ENCODE measurements at regions of chr1 and their contacts with region 1.

Region 1: GRCh38 chr1:157969697-157970485 is 23.6 kb upstream of the KIRREL1 start:
- DNase-seq: no peak
- H3K4me3 ChIP-seq: no peak overlapping the region
- CTCF ChIP-seq: peak; percentile 86

Region 2: GRCh38 chr1:157956732-157957131 is 13.2 kb before region 1 on chr1:
- CTCF ChIA-PET with region 1: interaction called, 16 read pairs
- POLR2A ChIA-PET with region 1: no interaction called
- DNase-seq: no peak
- H3K4me3 ChIP-seq: no peak overlapping the region
- CTCF ChIP-seq: no peak

Region 3: DNA sequence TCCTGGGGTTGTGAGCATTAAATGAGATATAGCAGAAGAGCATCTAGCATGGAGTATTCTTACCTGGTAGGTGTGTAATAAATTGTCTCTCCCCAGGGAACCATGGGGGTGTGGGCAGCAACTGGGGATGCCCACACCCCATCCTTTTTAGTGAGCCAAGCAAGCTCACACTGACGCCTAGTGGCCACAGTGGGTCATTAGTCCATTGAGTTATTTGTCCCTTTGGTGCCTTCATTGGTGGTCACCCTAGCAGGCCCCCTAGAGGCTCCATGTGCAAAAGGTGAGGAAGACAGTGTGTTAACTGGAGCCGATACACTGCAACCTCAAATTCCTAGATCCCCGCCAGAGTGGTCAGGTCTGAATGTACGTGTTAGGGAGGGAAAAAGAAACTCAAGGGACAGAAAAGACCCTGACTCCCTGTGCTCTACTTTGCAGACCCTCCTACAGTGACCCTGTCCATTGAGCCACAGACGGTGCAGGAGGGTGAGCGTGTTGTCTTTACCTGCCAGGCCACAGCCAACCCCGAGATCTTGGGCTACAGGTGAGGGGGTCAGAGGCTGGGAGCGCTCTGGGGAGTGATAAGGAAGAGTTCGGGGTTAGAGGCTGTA is 117.5 kb after region 1 on chr1:
- CTCF ChIA-PET with region 1: interaction called, 140 read pairs
- POLR2A ChIA-PET with region 1: no interaction called
- DNase-seq: peak; percentile 10
- H3K4me3 ChIP-seq: no peak overlapping the region
- CTCF ChIP-seq: peak; percentile 83

Region 4: GRCh38 chr1:158101927-158102326 is 132.0 kb after region 1 on chr1:
- CTCF ChIA-PET with region 1: interaction called, 140 read pairs
- POLR2A ChIA-PET with region 1: no interaction called
- DNase-seq: no peak
- H3K4me3 ChIP-seq: no peak overlapping the region
- CTCF ChIP-seq: no peak

Region 5: DNA sequence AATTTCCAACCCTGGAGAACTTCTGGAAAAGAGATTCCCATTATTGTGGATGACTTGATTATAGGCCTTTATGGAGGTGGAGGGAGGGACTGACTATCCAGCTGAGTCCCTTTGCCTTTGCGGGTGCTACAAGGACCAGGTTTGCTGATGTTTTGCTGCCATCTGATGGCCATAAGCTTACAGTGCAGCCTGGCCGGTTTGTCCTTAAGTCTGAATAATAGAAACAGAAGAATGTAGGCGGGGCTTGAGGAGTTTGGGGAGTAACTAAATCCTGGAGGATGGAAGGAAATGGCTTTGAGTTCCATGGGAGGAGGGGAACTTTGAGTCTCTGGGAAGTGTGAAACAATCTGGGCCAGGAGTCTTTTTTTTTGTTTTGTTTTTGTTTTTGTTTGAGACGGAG is 155.1 kb after region 1 on chr1:
- CTCF ChIA-PET with region 1: interaction called, 2,279 read pairs
- POLR2A ChIA-PET with region 1: interaction called, 12 read pairs
- DNase-seq: peak; percentile 71
- H3K4me3 ChIP-seq: no peak overlapping the region
- CTCF ChIP-seq: peak; percentile 87

Measured in AG04449 (cell line).